Mammary epithelial cell (primary cell): ENCODE measurements at regions of chr3 and their contacts with region 1.

Region 1: GRCh38 chr3:12891985-12892839 is 50.8 kb upstream of the RPL32 start:
- DNase-seq: peak; percentile 45
- H3K4me3 ChIP-seq: peak overlapping the region in 1 of 3 experiments; percentile 10
- H3K27ac ChIP-seq: no peak overlapping the region
- H3K4me1 ChIP-seq: peaks cover 3% of the 10 kb centered on the region
- H3K27me3 ChIP-seq: no peaks in the 10 kb centered on the region
- CTCF ChIP-seq: peak; percentile 88 to 94

Region 2: GRCh38 chr3:12484198-12484974 is 407.8 kb before region 1 on chr3 and contains the start of gene TSEN2:
- CTCF ChIA-PET with region 1: no interaction called
- dilution Hi-C with region 1: no loop called
- in situ Hi-C with region 1: no loop called
- intact Hi-C with region 1: loop called (anchors 2 kb)
- DNase-seq: peak; percentile 95
- H3K4me3 ChIP-seq: peak within 1 kb of the TSS; percentile 62 to 82 (median 79)
- H3K27ac ChIP-seq: peak within 1 kb of the TSS; percentile 38
- H3K4me1 ChIP-seq: peaks cover 19% of the 10 kb centered on the region
- H3K27me3 ChIP-seq: no peaks in the 10 kb centered on the region
- CTCF ChIP-seq: peak in 1 of 2 donors; percentile 38
- total RNA-seq, gene TSEN2: 16.0 to 24.6 TPM

Region 3: DNA sequence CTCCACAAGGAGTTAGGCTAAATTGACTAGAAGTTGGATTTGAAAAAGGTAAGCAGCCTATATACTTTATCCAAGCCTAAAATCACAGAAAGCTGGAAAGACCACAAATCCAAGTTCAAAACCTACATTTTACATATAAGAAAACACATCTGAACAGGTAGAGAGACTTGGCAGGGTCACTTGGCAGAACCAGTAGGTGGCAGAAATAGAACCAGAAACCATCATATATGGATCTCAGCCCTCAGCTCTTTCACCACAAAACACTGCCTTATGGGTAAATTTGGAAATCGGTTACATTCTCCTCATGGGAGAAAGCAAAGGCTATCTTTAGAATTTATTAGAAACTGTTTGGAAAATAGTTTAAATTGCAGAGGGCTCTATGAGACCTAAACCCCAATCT is 291.1 kb before region 1 on chr3:
- CTCF ChIA-PET with region 1: no interaction called
- dilution Hi-C with region 1: no loop called
- in situ Hi-C with region 1: no loop called
- intact Hi-C with region 1: loop called (anchors 5 kb)
- DNase-seq: no peak
- H3K4me3 ChIP-seq: no peak overlapping the region
- H3K27ac ChIP-seq: no peak overlapping the region
- H3K4me1 ChIP-seq: no peaks in the 10 kb centered on the region
- H3K27me3 ChIP-seq: no peaks in the 10 kb centered on the region
- CTCF ChIP-seq: peak in 1 of 2 donors; percentile 17

Region 4: GRCh38 chr3:12868039-12869034 is 23.9 kb before region 1 on chr3:
- CTCF ChIA-PET with region 1: no interaction called
- dilution Hi-C with region 1: no loop called
- in situ Hi-C with region 1: no loop called
- intact Hi-C with region 1: loop called (anchors 1 kb)
- DNase-seq: peak; percentile 70
- H3K4me3 ChIP-seq: no peak overlapping the region
- H3K27ac ChIP-seq: no peak overlapping the region
- H3K4me1 ChIP-seq: no peaks in the 10 kb centered on the region
- H3K27me3 ChIP-seq: no peaks in the 10 kb centered on the region
- CTCF ChIP-seq: peak; percentile 78 to 92

Region 5: DNA sequence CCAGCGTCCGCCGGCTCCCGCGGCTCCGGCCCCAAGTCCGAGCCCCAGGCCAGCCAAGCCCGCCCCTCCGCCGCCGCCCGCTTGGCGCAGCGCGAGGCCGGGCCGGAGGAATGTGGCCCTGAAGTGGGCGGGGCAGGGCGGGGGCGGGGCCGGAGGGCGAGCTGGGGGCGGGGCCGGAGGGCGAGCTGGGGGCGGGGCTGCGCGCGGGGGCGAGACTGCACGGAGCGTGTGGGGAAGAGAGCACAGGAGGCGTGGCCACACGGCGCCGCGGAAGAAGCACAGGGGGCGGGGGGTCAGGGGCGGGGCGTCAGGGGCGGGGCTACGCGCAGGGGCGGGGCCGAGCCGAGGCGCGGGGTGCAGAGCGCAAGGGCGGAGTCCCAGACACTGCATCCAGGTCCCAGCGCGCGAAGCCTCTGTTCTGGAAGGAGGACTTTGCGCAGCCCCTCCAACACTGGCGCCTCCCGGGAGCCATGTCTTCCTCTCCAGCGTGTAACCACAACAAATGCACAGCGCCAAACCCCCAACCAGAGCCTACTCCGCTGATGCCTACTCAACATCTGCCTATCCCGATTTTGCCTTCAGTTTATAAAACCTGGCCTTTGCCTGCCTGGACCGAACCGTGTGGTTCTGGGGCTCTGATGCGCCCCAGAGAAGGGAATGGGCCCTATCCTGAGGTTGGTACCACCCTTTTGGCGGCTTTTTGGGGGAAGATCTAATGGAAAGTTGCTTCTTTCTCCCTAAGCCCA is 75.6 kb after region 1 on chr3:
- CTCF ChIA-PET with region 1: interaction called, 33 read pairs
- dilution Hi-C with region 1: no loop called
- in situ Hi-C with region 1: no loop called
- intact Hi-C with region 1: no loop called
- DNase-seq: peak; percentile 70
- H3K4me3 ChIP-seq: peak overlapping the region; percentile 73 to 81 (median 77)
- H3K27ac ChIP-seq: peak overlapping the region; percentile 1
- H3K4me1 ChIP-seq: peaks cover 10% of the 10 kb centered on the region
- H3K27me3 ChIP-seq: no peaks in the 10 kb centered on the region
- CTCF ChIP-seq: no peak

Region 6: GRCh38 chr3:12984023-12984823 is 92.0 kb after region 1 on chr3:
- CTCF ChIA-PET with region 1: no interaction called
- dilution Hi-C with region 1: no loop called
- in situ Hi-C with region 1: no loop called
- intact Hi-C with region 1: loop called (anchors 5 kb)
- DNase-seq: peak; percentile 39
- H3K4me3 ChIP-seq: no peak overlapping the region
- H3K27ac ChIP-seq: no peak overlapping the region
- H3K4me1 ChIP-seq: no peaks in the 10 kb centered on the region
- H3K27me3 ChIP-seq: peaks cover 4% of the 10 kb centered on the region
- CTCF ChIP-seq: peak; percentile 77 to 86